Naive thymus-derived CD4-positive, alpha-beta T cell (primary cell): ENCODE measurements at regions of chr12 and their contacts with region 1.

Region 1: DNA sequence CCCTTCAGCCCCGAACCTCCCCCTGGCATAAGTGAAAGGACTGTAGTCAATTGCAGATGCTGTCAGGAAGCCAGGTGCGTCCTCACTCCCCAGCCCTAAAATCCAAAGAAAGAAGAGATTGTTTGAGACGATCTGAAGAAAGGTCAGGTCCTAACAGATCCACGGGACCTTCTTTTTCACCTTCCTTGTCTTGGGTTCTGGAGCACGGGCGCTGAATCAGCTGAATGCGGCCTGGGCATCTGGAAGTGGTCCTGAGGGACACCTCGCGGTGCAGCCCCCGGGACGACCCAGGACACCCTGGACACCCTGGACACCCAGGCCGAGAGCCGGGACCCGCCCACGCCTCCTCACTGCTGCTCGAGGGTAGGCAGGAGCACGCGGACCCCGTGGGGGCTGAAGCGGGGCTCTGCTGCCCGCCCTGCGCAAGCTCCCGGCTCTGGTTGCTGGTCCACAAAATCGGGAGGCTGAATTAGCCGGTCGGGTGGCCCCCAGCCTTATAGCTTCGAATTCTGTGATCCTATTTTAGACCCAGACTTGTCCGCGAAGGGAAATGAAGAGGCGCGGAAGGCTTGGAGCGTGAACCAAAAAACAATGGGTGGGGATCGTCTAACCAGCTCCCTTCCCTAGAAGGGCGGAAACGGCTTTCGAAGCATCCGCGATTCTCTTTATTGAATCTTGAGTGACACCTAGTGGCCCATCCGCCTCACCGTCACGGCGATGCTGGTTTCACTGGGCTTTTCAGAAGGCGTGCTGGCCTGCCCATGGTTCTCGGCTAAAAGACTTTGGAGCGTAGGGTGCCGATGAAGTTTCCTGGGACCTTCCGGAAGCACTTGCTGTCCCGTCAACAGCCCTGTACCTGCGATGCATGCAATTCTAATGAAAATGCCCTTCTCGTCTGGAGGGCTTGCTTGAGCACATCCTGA is 46.4 kb upstream of the PLXNC1 start:
- DNase-seq: peak; percentile 61 to 86 (median 82)
- ATAC-seq: peak; percentile 91
- H3K4me3 ChIP-seq: peak overlapping the region; percentile 77
- H3K4me3 Mint-ChIP-seq: peak overlapping the region; percentile 88 to 95 (median 90)
- H3K27ac ChIP-seq: peak overlapping the region; percentile 69
- H3K27ac Mint-ChIP-seq: peak overlapping the region; percentile 30 to 86 (median 76)
- H3K4me1 ChIP-seq: peaks cover 0 to 13% of the 10 kb centered on the region in 2 donors
- H3K4me1 Mint-ChIP-seq: peaks cover 11 to 30% (median 25%) of the 10 kb centered on the region in 7 donors
- H3K27me3 ChIP-seq: no peaks in the 10 kb centered on the region
- H3K27me3 Mint-ChIP-seq: peaks cover 0 to 19% (median 10%) of the 10 kb centered on the region in 5 donors

Region 2: GRCh38 chr12:92784795-92785562 is 1317.0 kb before region 1 on chr12:
- CTCF ChIA-PET with region 1: interaction called, 10 read pairs
- POLR2A ChIA-PET with region 1: no interaction called
- intact Hi-C with region 1: loop called (anchors 1 to 2 kb)
- DNase-seq: peak in 7 of 9 donors; percentile 61 to 80 (median 70)
- ATAC-seq: peak; percentile 99
- H3K4me3 ChIP-seq: no peak overlapping the region
- H3K4me3 Mint-ChIP-seq: no peak overlapping the region
- H3K27ac ChIP-seq: no peak overlapping the region
- H3K27ac Mint-ChIP-seq: peak overlapping the region in 1 of 9 donors; percentile 0
- H3K4me1 ChIP-seq: no peaks in the 10 kb centered on the region
- H3K4me1 Mint-ChIP-seq: peaks cover 4 to 19% (median 9%) of the 10 kb centered on the region in 7 donors
- H3K27me3 ChIP-seq: no peaks in the 10 kb centered on the region
- H3K27me3 Mint-ChIP-seq: no peaks in the 10 kb centered on the region

Region 3: DNA sequence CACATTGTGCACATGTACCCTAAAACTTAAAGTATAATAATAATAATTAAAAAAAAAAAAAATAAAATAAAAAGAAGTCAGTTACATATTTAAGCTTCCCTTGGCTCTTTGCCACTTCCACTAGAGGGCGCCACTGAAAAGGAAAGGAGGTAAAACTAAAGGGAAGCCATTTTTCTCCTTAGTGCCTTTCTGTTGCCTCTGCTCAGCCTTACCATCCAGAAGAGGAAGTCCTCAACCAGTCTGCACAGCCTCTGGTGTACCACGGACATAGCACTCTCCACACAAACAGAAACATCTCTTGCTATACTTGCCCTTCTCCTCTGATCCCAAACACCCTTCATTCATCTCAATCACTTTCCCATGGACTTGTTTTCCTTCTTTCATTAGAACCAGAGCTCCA is 1003.9 kb before region 1 on chr12:
- CTCF ChIA-PET with region 1: interaction called, 3 read pairs
- POLR2A ChIA-PET with region 1: no interaction called
- intact Hi-C with region 1: loop called (anchors 1 to 5 kb)
- DNase-seq: peak; percentile 33 to 75 (median 62)
- ATAC-seq: peak; percentile 96
- H3K4me3 ChIP-seq: no peak overlapping the region
- H3K4me3 Mint-ChIP-seq: no peak overlapping the region
- H3K27ac ChIP-seq: no peak overlapping the region
- H3K27ac Mint-ChIP-seq: peak overlapping the region in 1 of 9 donors; percentile 2
- H3K4me1 ChIP-seq: no peaks in the 10 kb centered on the region
- H3K4me1 Mint-ChIP-seq: peaks cover 4 to 9% (median 5%) of the 10 kb centered on the region in 7 donors
- H3K27me3 ChIP-seq: no peaks in the 10 kb centered on the region
- H3K27me3 Mint-ChIP-seq: no peaks in the 10 kb centered on the region

Region 4: GRCh38 chr12:93441617-93442410 is 660.2 kb before region 1 on chr12 and contains the start of gene UBE2N:
- CTCF ChIA-PET with region 1: interaction called, 3 read pairs
- POLR2A ChIA-PET with region 1: no interaction called
- intact Hi-C with region 1: loop called (anchors 1 to 2 kb)
- DNase-seq: peak; percentile 96 to 98 (median 97)
- ATAC-seq: peak; percentile 95
- H3K4me3 ChIP-seq: peak within 1 kb of the TSS; percentile 66
- H3K4me3 Mint-ChIP-seq: peak within 1 kb of the TSS; percentile 89 to 100 (median 97)
- H3K27ac ChIP-seq: peak within 1 kb of the TSS; percentile 98
- H3K27ac Mint-ChIP-seq: peak within 1 kb of the TSS; percentile 96 to 100 (median 98)
- H3K4me1 ChIP-seq: peaks cover 35 to 48% of the 10 kb centered on the region in 2 donors
- H3K4me1 Mint-ChIP-seq: peaks cover 44 to 54% (median 49%) of the 10 kb centered on the region in 7 donors
- H3K27me3 ChIP-seq: no peaks in the 10 kb centered on the region
- H3K27me3 Mint-ChIP-seq: no peaks in the 10 kb centered on the region
- total RNA-seq, gene UBE2N: 76.6 to 180 (median 77.5) TPM

Region 5: DNA sequence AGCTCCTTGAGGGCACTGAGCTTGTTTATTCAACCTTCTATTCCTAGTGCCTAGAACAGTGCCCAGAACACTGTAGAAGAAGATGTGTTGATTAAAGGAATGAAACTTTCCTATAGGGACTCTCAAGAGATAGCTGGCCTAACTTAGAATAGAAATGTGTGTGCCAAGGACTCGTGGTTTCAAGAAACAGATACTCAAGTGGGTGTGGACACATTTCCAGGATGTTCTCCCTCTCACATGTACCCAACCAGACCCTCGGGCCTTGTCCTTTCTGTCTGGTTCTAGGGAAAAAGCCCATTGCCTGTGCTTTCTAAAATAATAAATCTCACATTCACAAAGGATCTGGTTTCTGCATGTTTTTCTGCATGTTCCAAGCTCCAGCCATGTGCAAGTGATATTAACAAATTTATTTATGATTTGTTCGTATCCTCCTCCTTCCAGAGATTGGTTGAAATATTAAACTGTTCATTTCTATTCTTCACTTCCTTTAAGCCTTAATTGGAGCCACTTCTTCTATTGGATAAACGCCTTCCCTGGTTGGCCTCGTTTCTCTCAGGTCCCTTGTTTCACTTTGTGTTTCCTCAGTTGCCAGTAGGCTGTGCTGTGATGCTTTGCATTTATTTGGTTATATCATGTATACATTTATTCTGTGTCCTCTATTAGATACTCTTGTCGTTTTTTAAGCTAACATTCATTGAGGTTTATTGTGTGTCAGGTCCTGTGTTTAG is 335.0 kb before region 1 on chr12:
- CTCF ChIA-PET with region 1: interaction called, 129 read pairs
- POLR2A ChIA-PET with region 1: interaction called, 20 read pairs
- intact Hi-C with region 1: loop called (anchors 1 kb)
- DNase-seq: peak in 6 of 9 donors; percentile 23 to 58 (median 28)
- ATAC-seq: peak; percentile 84
- H3K4me3 ChIP-seq: no peak overlapping the region
- H3K4me3 Mint-ChIP-seq: peak overlapping the region in 5 of 10 donors; percentile 0 to 53 (median 6)
- H3K27ac ChIP-seq: no peak overlapping the region
- H3K27ac Mint-ChIP-seq: peak overlapping the region in 7 of 9 donors; percentile 6 to 74 (median 27)
- H3K4me1 ChIP-seq: no peaks in the 10 kb centered on the region
- H3K4me1 Mint-ChIP-seq: peaks cover 11 to 53% (median 17%) of the 10 kb centered on the region in 7 donors
- H3K27me3 ChIP-seq: no peaks in the 10 kb centered on the region
- H3K27me3 Mint-ChIP-seq: no peaks in the 10 kb centered on the region

Region 6: GRCh38 chr12:93979189-93979588 is 122.8 kb before region 1 on chr12:
- CTCF ChIA-PET with region 1: interaction called, 24 read pairs
- POLR2A ChIA-PET with region 1: no interaction called
- intact Hi-C with region 1: loop called (anchors 1 kb)
- DNase-seq: peak in 4 of 9 donors; percentile 21 to 51 (median 31)
- ATAC-seq: peak; percentile 27
- H3K4me3 ChIP-seq: no peak overlapping the region
- H3K4me3 Mint-ChIP-seq: no peak overlapping the region
- H3K27ac ChIP-seq: no peak overlapping the region
- H3K27ac Mint-ChIP-seq: peak overlapping the region in 1 of 9 donors; percentile 27
- H3K4me1 ChIP-seq: no peaks in the 10 kb centered on the region
- H3K4me1 Mint-ChIP-seq: peaks cover 13 to 48% (median 30%) of the 10 kb centered on the region in 7 donors
- H3K27me3 ChIP-seq: no peaks in the 10 kb centered on the region
- H3K27me3 Mint-ChIP-seq: peaks cover 0 to 6% (median 0%) of the 10 kb centered on the region in 5 donors

Region 7: DNA sequence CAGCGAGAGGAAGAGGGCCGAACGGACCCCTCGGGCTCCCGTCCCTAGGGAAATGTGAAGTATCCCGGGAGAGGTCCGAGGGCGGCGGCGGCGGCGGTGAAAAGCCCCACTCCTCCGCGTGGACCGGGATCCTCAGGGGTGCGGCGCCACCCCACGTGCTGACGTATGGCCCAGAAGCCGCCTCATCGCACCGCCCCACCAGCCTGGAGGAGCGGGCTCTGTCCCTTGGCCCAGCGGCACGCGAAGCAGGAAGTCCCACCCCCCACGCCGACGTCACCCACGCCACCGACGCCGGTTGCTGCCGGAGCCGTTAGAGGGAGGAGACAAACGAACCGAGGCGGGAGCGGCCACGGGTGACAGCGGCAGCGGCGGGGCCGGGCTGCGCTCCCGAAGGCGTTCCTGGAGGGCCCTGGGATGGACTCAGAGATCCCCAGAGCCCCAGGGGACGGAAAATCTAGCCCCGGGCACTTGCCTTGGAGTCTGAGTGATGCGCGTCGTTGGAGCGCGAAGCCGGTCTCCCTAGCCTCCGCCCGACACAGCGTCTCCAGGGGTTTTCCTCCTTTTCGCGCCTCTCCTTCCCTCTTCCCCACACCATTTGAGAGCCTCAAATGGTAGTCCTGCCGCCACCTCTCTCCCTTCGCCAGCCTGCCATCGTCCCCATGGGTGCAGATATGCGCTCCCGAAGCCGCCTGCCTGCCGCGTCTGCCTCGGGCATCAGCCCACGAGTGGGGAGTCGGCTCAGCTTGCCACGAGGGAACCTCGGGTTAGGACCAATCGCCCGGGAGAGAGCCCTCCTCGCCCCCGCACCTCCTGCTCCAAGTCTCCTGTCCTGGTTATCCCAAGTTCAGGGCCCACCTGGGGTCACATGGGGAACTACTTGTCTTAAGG is 358.0 kb after region 1 on chr12 and contains the start of gene CEP83:
- CTCF ChIA-PET with region 1: no interaction called
- POLR2A ChIA-PET with region 1: no interaction called
- intact Hi-C with region 1: no loop called
- DNase-seq: peak; percentile 89 to 97 (median 94)
- ATAC-seq: peak; percentile 99
- H3K4me3 ChIP-seq: peak within 1 kb of the TSS; percentile 68
- H3K4me3 Mint-ChIP-seq: peak within 1 kb of the TSS; percentile 92 to 98 (median 96)
- H3K27ac ChIP-seq: peak within 1 kb of the TSS; percentile 91
- H3K27ac Mint-ChIP-seq: peak within 1 kb of the TSS; percentile 70 to 97 (median 94)
- H3K4me1 ChIP-seq: peaks cover 3 to 13% of the 10 kb centered on the region in 2 donors
- H3K4me1 Mint-ChIP-seq: peaks cover 10 to 38% (median 30%) of the 10 kb centered on the region in 7 donors
- H3K27me3 ChIP-seq: no peaks in the 10 kb centered on the region
- H3K27me3 Mint-ChIP-seq: peaks cover 0 to 12% (median 6%) of the 10 kb centered on the region in 5 donors
- total RNA-seq, gene CEP83: 12.8 to 22.7 (median 16.8) TPM

Region 8: GRCh38 chr12:94532490-94533422 is 430.8 kb after region 1 on chr12:
- CTCF ChIA-PET with region 1: interaction called, 3 read pairs
- POLR2A ChIA-PET with region 1: no interaction called
- intact Hi-C with region 1: loop called (anchors 1 kb)
- DNase-seq: peak; percentile 20 to 68 (median 56)
- ATAC-seq: peak; percentile 80
- H3K4me3 ChIP-seq: no peak overlapping the region
- H3K4me3 Mint-ChIP-seq: no peak overlapping the region
- H3K27ac ChIP-seq: no peak overlapping the region
- H3K27ac Mint-ChIP-seq: no peak overlapping the region
- H3K4me1 ChIP-seq: no peaks in the 10 kb centered on the region
- H3K4me1 Mint-ChIP-seq: peaks cover 0 to 17% (median 3%) of the 10 kb centered on the region in 7 donors
- H3K27me3 ChIP-seq: no peaks in the 10 kb centered on the region
- H3K27me3 Mint-ChIP-seq: peaks cover 3 to 19% (median 8%) of the 10 kb centered on the region in 5 donors